WTC11 (cell line): ENCODE measurements at regions of chr9 and their contacts with region 1.

Region 1: DNA sequence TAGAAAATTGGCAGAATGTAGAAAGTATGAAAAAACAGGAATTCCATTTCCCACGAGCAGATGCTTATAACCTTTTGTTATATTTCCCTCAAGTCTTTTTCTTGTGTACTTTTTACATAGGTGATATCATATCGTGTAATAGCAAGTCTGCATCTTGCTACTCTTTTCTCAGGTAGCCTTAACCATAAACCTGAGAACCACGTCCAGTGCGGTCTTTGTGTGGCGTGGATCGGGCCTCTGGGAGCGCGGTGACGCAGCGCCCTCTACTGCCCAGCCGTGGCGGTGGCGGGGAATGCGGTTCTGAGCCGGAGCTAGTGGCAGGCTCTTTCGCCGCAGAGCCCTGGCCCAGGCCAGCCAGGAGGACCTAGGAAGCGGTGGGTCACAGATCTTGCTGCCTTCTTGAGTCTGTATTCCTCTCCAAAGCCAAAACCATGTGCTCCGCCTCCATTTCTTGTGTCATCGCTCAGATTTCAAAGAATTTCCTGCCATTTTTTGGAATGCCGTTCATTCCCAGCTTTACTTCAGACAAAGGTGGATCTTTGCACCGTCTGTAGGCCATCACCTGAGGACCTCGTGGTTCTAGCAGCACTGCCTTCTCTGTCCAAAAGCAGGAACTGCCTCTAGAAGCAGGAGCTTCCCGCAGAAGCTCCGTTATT is 71.9 kb downstream of the MVB12B start:
- DNase-seq: peak; percentile 86
- ATAC-seq: peak; percentile 90
- H3K4me3 Mint-ChIP-seq: no peak overlapping the region
- H3K27ac Mint-ChIP-seq: no peak overlapping the region
- H3K4me1 Mint-ChIP-seq: peaks cover 23% of the 10 kb centered on the region
- H3K27me3 Mint-ChIP-seq: no peaks in the 10 kb centered on the region
- CTCF ChIP-seq: peak; percentile 92

Region 2: DNA sequence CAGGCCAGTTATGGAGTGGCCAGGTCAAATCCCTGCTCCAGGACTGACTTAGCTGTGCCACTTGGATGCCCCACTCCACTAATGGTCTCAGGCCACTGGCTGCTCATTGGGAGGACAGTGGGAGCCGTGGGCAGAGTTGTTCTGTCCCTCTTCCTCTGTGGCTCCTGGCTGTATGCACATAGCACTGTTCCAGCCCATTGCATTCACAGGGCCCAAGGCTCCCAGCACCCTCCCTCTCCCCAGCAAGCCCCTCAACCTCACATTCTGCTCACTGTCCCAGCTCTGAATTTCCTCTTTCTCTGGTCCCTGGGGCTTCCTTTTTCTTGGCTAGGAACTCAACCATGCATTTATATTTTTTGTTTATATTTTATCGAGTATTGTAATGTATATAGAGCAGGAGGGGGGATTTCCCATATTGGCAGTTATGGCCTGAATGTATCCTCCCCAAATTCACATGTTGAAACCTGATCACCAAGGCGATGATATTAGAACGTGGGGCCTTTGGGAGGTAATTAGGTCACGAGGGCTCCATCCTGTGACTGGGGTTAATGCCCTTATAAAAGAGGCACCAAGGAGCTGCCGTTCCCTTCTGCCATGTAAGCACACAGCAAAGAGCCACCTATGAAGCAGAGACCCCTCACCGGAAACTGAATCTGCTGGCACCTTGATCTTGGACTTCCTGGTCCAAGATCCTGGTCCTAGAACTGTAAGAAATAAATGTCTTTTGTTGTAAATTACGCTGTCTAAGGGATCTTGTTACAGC is 88.9 kb before region 1 on chr9:
- CTCF ChIA-PET with region 1: interaction called, 19 read pairs
- POLR2A ChIA-PET with region 1: no interaction called
- DNase-seq: no peak
- ATAC-seq: no peak
- H3K4me3 Mint-ChIP-seq: no peak overlapping the region
- H3K27ac Mint-ChIP-seq: no peak overlapping the region
- H3K4me1 Mint-ChIP-seq: 0 out of 2 replicates have a peak, but pooled peaks cover 2% of the 10 kb centered on the region
- H3K27me3 Mint-ChIP-seq: peaks cover 2% of the 10 kb centered on the region; the same call in 1 of the 2 replicates
- CTCF ChIP-seq: no peak

Region 3: DNA sequence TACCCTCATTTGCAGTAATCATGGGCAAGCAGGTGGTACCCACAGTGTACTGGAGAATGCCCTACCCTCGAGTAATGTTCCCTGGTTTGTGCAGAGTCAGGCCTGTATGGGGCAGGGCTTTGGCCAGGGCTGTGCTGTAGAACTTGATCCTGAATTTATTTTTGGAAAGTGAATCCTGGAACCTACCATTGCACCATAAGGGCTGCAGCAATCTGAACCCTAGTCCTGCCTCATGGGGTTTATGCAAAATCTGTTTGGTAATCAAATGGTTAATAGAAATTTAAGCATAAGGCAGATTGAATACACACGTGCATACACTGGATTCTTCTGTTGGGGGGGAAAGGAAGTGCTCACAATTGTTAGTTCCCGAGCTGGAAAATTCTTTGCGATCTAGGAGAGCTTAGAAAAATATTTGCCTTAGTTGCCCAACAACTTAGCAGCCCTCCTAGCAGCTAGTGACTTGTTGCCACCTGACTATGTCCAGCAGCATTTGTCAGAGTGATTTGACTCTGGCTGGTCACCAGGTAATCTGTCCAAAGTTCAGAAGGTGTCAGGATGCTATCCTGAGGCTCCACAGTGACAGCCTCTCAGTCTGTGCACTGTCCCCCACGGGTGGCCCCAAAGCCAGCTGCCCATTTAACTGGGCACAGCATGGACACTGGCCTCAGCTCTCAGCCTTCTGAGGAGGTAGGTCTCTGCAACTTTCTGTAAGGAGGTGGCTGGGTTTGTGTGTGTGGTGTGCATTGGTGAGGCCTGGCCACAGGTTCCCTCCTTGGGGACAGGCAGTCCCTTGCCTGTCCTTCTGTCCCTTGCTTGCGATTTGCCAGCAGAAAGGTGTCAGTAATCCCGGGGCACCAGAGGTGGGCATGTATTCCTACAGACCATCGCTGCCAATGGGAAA is 63.6 kb before region 1 on chr9:
- CTCF ChIA-PET with region 1: interaction called, 14 read pairs
- POLR2A ChIA-PET with region 1: no interaction called
- DNase-seq: no peak
- ATAC-seq: no peak
- H3K4me3 Mint-ChIP-seq: no peak overlapping the region
- H3K27ac Mint-ChIP-seq: no peak overlapping the region
- H3K4me1 Mint-ChIP-seq: peaks cover 30% of the 10 kb centered on the region
- H3K27me3 Mint-ChIP-seq: no peaks in the 10 kb centered on the region
- CTCF ChIP-seq: no peak

Region 4: DNA sequence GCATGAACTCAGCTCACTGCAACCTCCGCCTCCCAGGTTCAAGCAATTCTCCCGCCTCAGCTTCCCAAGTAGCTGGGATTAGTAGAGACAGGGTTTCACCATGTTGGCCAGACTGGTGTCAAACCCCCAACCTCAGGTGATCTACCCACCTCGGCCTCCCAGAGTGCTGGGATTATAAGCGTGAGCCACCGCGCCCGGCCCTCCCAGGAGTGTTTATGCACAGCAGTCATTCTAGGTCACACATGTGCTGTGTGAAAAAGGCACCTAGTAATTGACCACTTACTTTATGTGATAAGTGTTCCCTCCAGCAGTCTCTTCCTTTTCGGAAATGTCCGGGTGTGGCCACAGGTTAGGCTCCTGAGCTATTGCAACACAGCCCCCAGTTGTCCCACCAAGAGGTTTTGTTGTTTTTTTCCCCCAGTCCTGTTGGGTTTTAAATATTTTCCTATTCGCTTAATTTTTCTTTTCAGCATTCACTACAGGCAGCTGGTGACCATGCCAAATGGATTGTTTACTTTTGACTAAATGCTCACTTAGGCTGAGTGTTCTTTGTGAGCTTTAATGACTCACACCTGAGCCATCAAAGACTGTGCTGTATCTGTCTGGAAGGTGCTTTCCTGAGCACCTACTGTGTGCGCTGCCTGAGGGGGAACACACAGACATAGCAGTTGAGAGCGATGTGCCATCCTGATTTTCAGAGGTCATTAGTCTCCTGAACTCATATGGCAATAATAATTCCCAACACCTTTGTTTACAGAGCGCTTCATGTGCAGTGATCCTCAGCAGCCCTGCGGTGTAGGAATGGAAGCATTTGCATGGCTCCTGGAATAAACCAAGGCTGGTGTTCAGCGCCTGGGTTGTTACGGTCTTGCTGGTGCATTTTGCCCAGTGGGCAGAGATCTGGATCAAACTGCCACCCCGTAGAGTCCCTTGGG is 22.4 kb after region 1 on chr9:
- CTCF ChIA-PET with region 1: interaction called, 11 read pairs
- POLR2A ChIA-PET with region 1: no interaction called
- DNase-seq: no peak
- ATAC-seq: peak; percentile 8; the same call in 1 of the 2 replicates
- H3K4me3 Mint-ChIP-seq: no peak overlapping the region
- H3K27ac Mint-ChIP-seq: 0 out of 2 replicates have a peak overlapping the region, but pooled peaks have one; percentile 23
- H3K4me1 Mint-ChIP-seq: peaks cover 39% of the 10 kb centered on the region
- H3K27me3 Mint-ChIP-seq: peaks cover 2% of the 10 kb centered on the region; the same call in 1 of the 2 replicates
- CTCF ChIP-seq: no peak

Region 5: DNA sequence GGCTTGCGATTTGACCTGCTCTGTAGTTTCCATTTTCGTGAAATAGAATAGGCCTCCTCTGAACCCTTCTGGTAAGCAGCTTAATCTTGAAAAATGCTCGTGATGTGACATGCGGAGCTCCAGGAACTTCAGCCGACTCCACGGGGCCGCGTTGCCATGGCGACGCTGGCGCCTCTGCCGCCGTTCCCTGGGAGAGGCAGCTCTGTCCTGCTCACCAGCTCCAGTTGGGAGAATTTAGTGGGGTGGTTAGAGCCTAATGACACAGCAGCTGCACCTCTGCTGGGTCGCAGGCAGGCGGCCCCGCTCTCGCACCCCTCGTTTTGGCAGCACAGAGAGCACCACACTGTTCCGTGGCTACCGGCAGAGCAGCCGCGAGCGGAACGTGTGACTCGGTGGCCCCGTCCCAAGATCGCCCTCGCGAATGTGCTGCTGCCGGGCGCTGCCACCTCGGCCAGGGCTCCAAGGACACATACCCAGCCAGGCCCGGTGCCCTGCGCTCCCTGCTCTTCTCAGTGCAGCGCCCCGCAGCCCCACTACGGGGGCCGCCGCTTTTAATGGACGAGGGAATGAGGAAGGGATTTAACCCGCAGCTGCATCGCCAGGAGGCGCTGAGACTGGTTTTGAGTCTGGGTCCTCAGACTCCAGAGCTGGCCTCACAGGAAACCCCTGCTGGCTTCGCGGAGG is 84.0 kb after region 1 on chr9:
- CTCF ChIA-PET with region 1: interaction called, 41 read pairs
- POLR2A ChIA-PET with region 1: no interaction called
- DNase-seq: peak; percentile 64
- ATAC-seq: peak; percentile 79
- H3K4me3 Mint-ChIP-seq: peak overlapping the region; percentile 60
- H3K27ac Mint-ChIP-seq: no peak overlapping the region
- H3K4me1 Mint-ChIP-seq: no peaks in the 10 kb centered on the region; the same call in 1 of the 2 replicates
- H3K27me3 Mint-ChIP-seq: no peaks in the 10 kb centered on the region; the same call in 1 of the 2 replicates
- CTCF ChIP-seq: no peak